SK-N-SH (cell line): ENCODE measurements at regions of chr22 and their contacts with region 1.

Region 1: GRCh38 chr22:37862570-37863325 is 13.5 kb downstream of the EIF3L start:
- DNase-seq: no peak
- H3K4me3 ChIP-seq: no peak overlapping the region
- H3K27ac ChIP-seq: no peak overlapping the region; a peak in 1 of 4 replicates
- H3K4me1 ChIP-seq: 0 out of 4 replicates have a peak, but pooled peaks cover 0 to 2% of the 10 kb centered on the region in 2 experiments
- H3K27me3 ChIP-seq: no peaks in the 10 kb centered on the region
- CTCF ChIP-seq: no peak
- EP300 ChIP-seq: no peak
- RAD21 ChIP-seq: no peak

Region 2: GRCh38 chr22:37807410-37808293 is 55.1 kb before region 1 on chr22 and contains the start of gene GCAT:
- CTCF ChIA-PET with region 1: interaction called, 182 read pairs
- POLR2A ChIA-PET with region 1: no interaction called
- DNase-seq: peak; percentile 99
- H3K4me3 ChIP-seq: peak within 1 kb of the TSS; percentile 70
- H3K27ac ChIP-seq: peak within 1 kb of the TSS; percentile 61
- H3K4me1 ChIP-seq: peaks cover 0 to 34% of the 10 kb centered on the region in 2 experiments; a peak in 2 of 4 replicates
- H3K27me3 ChIP-seq: no peaks in the 10 kb centered on the region
- CTCF ChIP-seq: no peak
- EP300 ChIP-seq: no peak
- RAD21 ChIP-seq: no peak
- polyA plus RNA-seq, gene GCAT: 20.3 and 24.2 TPM in 2 replicates

Region 3: GRCh38 chr22:37849089-37849751 is 13.5 kb before region 1 on chr22 and contains the start of gene EIF3L:
- CTCF ChIA-PET with region 1: interaction called, 25 read pairs
- POLR2A ChIA-PET with region 1: interaction called, 5 read pairs
- DNase-seq: peak; percentile 96
- H3K4me3 ChIP-seq: peak within 1 kb of the TSS; percentile 79 to 98
- H3K27ac ChIP-seq: peak within 1 kb of the TSS; percentile 19 to 89
- H3K4me1 ChIP-seq: peaks cover 11 to 13% of the 10 kb centered on the region in 2 experiments; a peak in 3 of 4 replicates
- H3K27me3 ChIP-seq: no peaks in the 10 kb centered on the region
- CTCF ChIP-seq: no peak
- EP300 ChIP-seq: no peak
- RAD21 ChIP-seq: no peak
- polyA plus RNA-seq, gene EIF3L: 478 and 642 TPM in 2 replicates

Region 4: GRCh38 chr22:37880668-37881440 is 18.1 kb after region 1 on chr22:
- CTCF ChIA-PET with region 1: interaction called, 34 read pairs
- POLR2A ChIA-PET with region 1: interaction called, 3 read pairs
- DNase-seq: no peak
- H3K4me3 ChIP-seq: no peak overlapping the region
- H3K27ac ChIP-seq: peak overlapping the region in 1 of 2 experiments; percentile 70; a peak in 2 of 4 replicates
- H3K4me1 ChIP-seq: peaks cover 2 to 10% of the 10 kb centered on the region in 2 experiments; a peak in 3 of 4 replicates
- H3K27me3 ChIP-seq: no peaks in the 10 kb centered on the region
- CTCF ChIP-seq: no peak
- EP300 ChIP-seq: no peak
- RAD21 ChIP-seq: no peak

Region 5: GRCh38 chr22:37887610-37888378 is 25.0 kb after region 1 on chr22:
- CTCF ChIA-PET with region 1: interaction called, 33 read pairs
- POLR2A ChIA-PET with region 1: no interaction called
- DNase-seq: no peak
- H3K4me3 ChIP-seq: peak overlapping the region in 1 of 2 experiments; percentile 27; a peak in 1 of 4 replicates
- H3K27ac ChIP-seq: peak overlapping the region in 1 of 2 experiments; percentile 11; a peak in 1 of 4 replicates
- H3K4me1 ChIP-seq: peaks cover 0 to 5% of the 10 kb centered on the region in 2 experiments; a peak in 1 of 4 replicates
- H3K27me3 ChIP-seq: no peaks in the 10 kb centered on the region
- CTCF ChIP-seq: peak; percentile 59
- EP300 ChIP-seq: no peak
- RAD21 ChIP-seq: peak; percentile 42

Region 6: GRCh38 chr22:38030311-38031133 is 167.8 kb after region 1 on chr22:
- CTCF ChIA-PET with region 1: no interaction called
- POLR2A ChIA-PET with region 1: no interaction called
- DNase-seq: no peak
- H3K4me3 ChIP-seq: no peak overlapping the region
- H3K27ac ChIP-seq: no peak overlapping the region
- H3K4me1 ChIP-seq: peaks cover 0 to 4% of the 10 kb centered on the region in 2 experiments; a peak in 1 of 4 replicates
- H3K27me3 ChIP-seq: no peaks in the 10 kb centered on the region
- CTCF ChIP-seq: no peak
- EP300 ChIP-seq: no peak
- RAD21 ChIP-seq: no peak

Region 7: GRCh38 chr22:38353142-38353629 is 490.4 kb after region 1 on chr22:
- CTCF ChIA-PET with region 1: no interaction called
- POLR2A ChIA-PET with region 1: no interaction called
- DNase-seq: peak; percentile 88
- H3K4me3 ChIP-seq: no peak overlapping the region; a peak in 1 of 4 replicates
- H3K27ac ChIP-seq: no peak overlapping the region
- H3K4me1 ChIP-seq: no peaks in the 10 kb centered on the region
- H3K27me3 ChIP-seq: no peaks in the 10 kb centered on the region
- CTCF ChIP-seq: peak; percentile 75
- EP300 ChIP-seq: no peak
- RAD21 ChIP-seq: peak; percentile 72